Heart right ventricle (tissue), 16 donors: ENCODE measurements at regions of chr2 and their contacts with region 1.

Region 1: DNA sequence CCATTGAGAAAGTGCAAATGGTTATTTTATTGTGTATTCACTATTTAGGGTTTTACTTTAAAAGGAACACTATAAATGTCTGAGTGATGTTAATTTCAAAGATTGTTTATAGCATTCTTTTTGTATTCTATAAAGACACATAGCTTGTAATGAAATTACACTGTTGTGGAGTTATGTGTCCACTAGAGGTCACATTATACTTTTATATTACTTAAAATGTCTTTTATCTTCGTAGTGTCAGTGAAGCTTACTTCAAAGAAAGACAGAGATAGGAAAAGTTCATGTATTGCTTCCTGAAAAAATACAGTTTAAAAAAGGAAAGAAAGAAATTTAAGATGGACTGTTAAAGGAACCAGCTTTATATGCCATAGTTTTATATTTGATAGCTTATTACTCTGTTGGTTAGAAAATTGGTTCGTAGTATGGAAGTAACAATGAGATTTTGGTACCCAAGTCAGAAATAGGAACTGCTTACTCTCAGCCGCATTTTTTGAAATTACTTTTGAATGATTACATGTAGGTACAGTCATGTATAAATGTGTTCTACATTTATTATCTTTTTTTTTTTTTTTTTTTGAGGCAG is 20.5 kb downstream of the APLF start:
- DNase-seq: no peak
- ATAC-seq: no peak
- H3K4me3 ChIP-seq: no peak overlapping the region
- H3K27ac ChIP-seq: no peak overlapping the region
- H3K4me1 ChIP-seq: peaks cover 0 to 6% (median 0%) of the 10 kb centered on the region in 9 donors
- H3K27me3 ChIP-seq: no peaks in the 10 kb centered on the region
- CTCF ChIP-seq: peak; percentile 7 to 70 (median 55)

Region 2: GRCh38 chr2:68594674-68595492 is 107.0 kb after region 1 on chr2:
- intact Hi-C with region 1: loop called in 1 of 10 experiments (anchors 10 kb)
- DNase-seq: peak; percentile 10 to 17
- ATAC-seq: peak in 4 of 8 donors; percentile 42 to 79 (median 69)
- H3K4me3 ChIP-seq: peak overlapping the region in 3 of 10 donors; percentile 6 to 21 (median 15)
- H3K27ac ChIP-seq: peak overlapping the region in 7 of 10 donors; percentile 23 to 61 (median 42)
- H3K4me1 ChIP-seq: peaks cover 0 to 15% (median 4%) of the 10 kb centered on the region in 9 donors
- H3K27me3 ChIP-seq: no peaks in the 10 kb centered on the region
- CTCF ChIP-seq: peak; percentile 32 to 90 (median 77)

Region 3: GRCh38 chr2:68709421-68709911 is 221.6 kb after region 1 on chr2:
- intact Hi-C with region 1: loop called in 3 of 10 experiments (anchors 10 kb)
- DNase-seq: no peak
- ATAC-seq: peak in 7 of 8 donors; percentile 61 to 77 (median 63)
- H3K4me3 ChIP-seq: no peak overlapping the region
- H3K27ac ChIP-seq: no peak overlapping the region
- H3K4me1 ChIP-seq: peaks cover 0 to 9% (median 0%) of the 10 kb centered on the region in 9 donors
- H3K27me3 ChIP-seq: peaks cover 0 to 3% (median 0%) of the 10 kb centered on the region in 7 donors
- CTCF ChIP-seq: peak; percentile 33 to 87 (median 75)

Region 4: GRCh38 chr2:68715353-68716041 is 227.6 kb after region 1 on chr2:
- intact Hi-C with region 1: loop called in 5 of 10 experiments (anchors 5 to 10 kb)
- DNase-seq: no peak
- ATAC-seq: peak in 5 of 8 donors; percentile 31 to 73 (median 54)
- H3K4me3 ChIP-seq: no peak overlapping the region
- H3K27ac ChIP-seq: peak overlapping the region in 1 of 10 donors; percentile 70
- H3K4me1 ChIP-seq: peaks cover 0 to 36% (median 0%) of the 10 kb centered on the region in 9 donors
- H3K27me3 ChIP-seq: peaks cover 0 to 16% (median 0%) of the 10 kb centered on the region in 7 donors
- CTCF ChIP-seq: peak; percentile 22 to 71 (median 62)

Region 5: DNA sequence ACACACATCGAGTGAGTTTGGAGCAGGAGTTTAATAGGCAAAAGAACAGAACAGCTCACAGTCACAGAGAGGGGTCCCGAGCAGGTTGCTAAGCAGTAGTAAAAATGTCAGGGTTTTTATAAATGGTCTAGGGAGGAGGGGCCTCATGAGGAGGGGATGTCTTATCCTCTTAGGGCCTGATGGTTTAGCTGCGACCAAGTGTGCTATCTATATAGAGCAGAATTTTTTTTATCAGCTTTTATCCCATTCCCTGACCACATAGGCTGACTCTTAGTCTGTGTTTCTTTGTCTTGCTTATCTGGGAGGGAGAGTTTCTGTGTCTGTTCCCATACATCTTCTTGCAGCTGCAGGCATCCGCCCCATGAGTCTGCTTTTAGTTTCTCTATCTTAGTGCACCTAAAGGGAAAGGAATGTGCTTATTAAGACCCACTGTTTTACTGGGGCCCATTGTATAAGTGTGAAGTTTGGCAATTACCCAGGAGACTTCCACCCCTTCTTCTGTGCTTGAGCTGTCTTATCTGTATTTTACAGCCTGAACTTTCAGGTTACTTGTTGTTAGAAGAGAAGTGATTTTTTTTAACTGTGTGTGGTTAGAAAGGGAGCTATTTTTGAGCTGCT is 1311.2 kb after region 1 on chr2:
- intact Hi-C with region 1: no loop called
- DNase-seq: no peak
- ATAC-seq: peak in 5 of 8 donors; percentile 28 to 41 (median 38)
- H3K4me3 ChIP-seq: peak overlapping the region in 8 of 10 donors; percentile 11 to 50 (median 46)
- H3K27ac ChIP-seq: peak overlapping the region in 9 of 10 donors; percentile 21 to 80 (median 64)
- H3K4me1 ChIP-seq: peaks cover 4 to 27% (median 23%) of the 10 kb centered on the region in 9 donors
- H3K27me3 ChIP-seq: no peaks in the 10 kb centered on the region
- CTCF ChIP-seq: no peak